Transverse colon (tissue), 4 donors: ENCODE measurements at regions of chr14 and their contacts with region 1.

Region 1: GRCh38 chr14:99619835-99620834 is 16.1 kb upstream of the CCDC85C start:
- DNase-seq: no peak
- H3K4me3 ChIP-seq: no peak overlapping the region
- H3K27ac ChIP-seq: no peak overlapping the region
- H3K4me1 ChIP-seq: peaks cover 0 to 10% (median under 1%) of the 10 kb centered on the region in 4 donors
- H3K27me3 ChIP-seq: peaks cover 3% of the 10 kb centered on the region
- CTCF ChIP-seq: no peak
- EP300 ChIP-seq: no peak
- POLR2A ChIP-seq: no peak

Region 2: DNA sequence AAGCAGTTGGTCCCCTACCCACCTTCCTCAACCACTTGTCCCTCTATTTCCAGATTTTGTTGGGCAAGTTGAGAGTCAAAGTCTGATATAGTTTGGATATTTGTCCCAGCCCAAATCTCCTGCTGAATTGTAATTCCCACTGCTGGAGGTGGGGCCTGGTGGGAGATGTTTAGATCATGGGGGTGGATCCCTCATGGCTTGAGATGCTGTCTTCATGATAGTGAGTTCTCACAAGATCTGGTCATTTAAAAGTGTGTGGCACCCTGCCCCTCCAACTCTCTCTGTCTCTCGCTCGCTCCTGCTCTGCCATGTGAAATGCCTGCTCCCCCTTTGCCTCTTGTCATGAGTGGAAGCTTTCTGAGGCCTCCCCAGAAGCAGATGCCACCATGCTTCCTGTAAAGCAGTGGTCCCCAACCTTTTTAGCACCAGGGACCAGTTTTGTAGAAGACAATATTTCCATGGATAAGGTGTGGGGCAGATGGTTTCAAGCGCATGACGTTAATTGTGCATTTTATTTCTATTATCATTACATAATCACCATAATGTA is 310.8 kb before region 1 on chr14:
- in situ Hi-C with region 1: no loop called
- intact Hi-C with region 1: no loop called
- DNase-seq: no peak
- H3K4me3 ChIP-seq: no peak overlapping the region
- H3K27ac ChIP-seq: no peak overlapping the region
- H3K4me1 ChIP-seq: no peaks in the 10 kb centered on the region
- H3K27me3 ChIP-seq: no peaks in the 10 kb centered on the region
- CTCF ChIP-seq: no peak
- EP300 ChIP-seq: no peak
- POLR2A ChIP-seq: no peak

Region 3: GRCh38 chr14:99524804-99525698 is 95.1 kb before region 1 on chr14:
- in situ Hi-C with region 1: loop called in 3 of 4 experiments (anchors 5 to 25 kb)
- intact Hi-C with region 1: no loop called
- DNase-seq: peak; percentile 38
- H3K4me3 ChIP-seq: no peak overlapping the region
- H3K27ac ChIP-seq: peak overlapping the region; percentile 43 to 84 (median 70)
- H3K4me1 ChIP-seq: peaks cover 31 to 43% (median 34%) of the 10 kb centered on the region in 4 donors
- H3K27me3 ChIP-seq: no peaks in the 10 kb centered on the region
- CTCF ChIP-seq: peak in 1 of 5 experiments; percentile 16
- EP300 ChIP-seq: no peak
- POLR2A ChIP-seq: no peak

Region 4: DNA sequence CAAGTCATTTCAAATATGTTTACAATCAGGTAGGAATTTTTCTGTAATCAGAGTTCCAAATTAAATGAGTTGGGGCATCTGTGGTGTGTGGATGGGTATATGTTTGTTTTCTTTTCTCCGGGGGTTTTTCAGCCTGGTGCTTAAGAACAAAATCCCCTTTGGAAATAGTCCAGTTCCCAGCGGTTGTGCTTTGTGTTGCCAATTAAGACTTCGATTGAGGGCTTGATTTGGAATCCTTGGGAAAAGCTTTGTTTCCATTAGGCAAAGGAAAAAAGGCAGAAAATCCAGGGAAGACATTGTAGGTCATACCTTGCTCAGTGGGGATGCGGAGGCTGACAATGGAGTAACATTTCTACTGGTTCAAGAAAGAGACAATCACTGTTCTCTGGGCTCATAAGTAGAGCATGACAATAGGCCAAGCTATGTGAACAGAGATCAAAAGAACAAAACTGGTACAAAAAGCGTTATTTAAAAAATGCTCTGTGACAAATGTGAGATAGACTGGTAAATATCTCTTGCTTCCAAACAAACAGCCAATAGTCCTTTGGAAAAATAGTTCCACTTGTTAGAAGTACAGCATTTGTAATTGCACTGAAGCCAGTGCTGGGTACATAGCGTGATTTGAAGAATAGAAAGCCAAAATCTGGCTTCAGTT is 252.8 kb after region 1 on chr14:
- in situ Hi-C with region 1: no loop called
- intact Hi-C with region 1: no loop called
- DNase-seq: no peak
- H3K4me3 ChIP-seq: no peak overlapping the region
- H3K27ac ChIP-seq: no peak overlapping the region
- H3K4me1 ChIP-seq: peaks cover 0 to 5% (median 0%) of the 10 kb centered on the region in 4 donors
- H3K27me3 ChIP-seq: peaks cover 6% of the 10 kb centered on the region
- CTCF ChIP-seq: no peak
- EP300 ChIP-seq: no peak
- POLR2A ChIP-seq: no peak

Region 5: DNA sequence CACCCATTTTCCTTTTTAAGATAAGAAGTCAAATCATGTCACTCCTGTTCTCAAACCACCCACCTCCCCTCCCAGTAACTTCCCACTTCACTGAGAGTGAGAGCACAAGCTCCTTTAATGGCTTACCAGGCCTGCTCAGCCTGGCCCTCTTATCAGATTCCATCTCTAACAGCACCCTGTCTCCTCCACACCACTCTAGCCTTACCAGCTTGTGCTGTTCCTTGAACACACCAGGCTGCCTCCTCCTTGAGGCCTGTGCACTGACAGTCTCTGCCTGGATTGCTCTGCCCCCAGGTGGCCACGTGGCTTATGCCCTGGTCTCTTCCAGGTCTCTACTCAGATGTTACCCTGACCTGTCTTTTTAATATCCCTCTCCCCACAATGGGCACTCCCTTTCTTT is 405.0 kb after region 1 on chr14:
- in situ Hi-C with region 1: no loop called
- intact Hi-C with region 1: no loop called
- DNase-seq: peak; percentile 17
- H3K4me3 ChIP-seq: no peak overlapping the region
- H3K27ac ChIP-seq: no peak overlapping the region
- H3K4me1 ChIP-seq: peaks cover under 1 to 5% (median 1%) of the 10 kb centered on the region in 4 donors
- H3K27me3 ChIP-seq: peaks cover 2% of the 10 kb centered on the region
- CTCF ChIP-seq: no peak
- EP300 ChIP-seq: no peak
- POLR2A ChIP-seq: no peak